OCI-LY7 (cell line): ENCODE measurements at regions of chr5 and their contacts with region 1.

Region 1: DNA sequence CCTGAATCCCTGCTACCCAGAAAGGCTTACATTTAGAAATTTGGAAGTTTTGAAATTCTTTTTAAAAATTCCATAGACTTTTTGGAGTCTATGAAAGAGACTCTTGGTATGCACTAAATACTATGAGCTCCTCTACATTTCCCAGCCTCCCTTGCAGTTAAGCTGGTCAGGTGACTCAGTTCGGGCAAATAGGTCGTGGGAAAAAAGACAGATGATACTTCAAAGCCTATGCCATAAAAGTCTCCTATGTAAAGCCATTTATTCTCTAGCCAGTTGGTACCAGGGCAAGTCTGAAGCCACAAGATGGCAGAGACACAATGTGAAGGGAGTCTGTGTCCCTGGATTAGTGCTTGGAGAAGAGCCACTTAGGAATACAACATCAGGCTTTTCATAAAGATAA is 101.8 kb downstream of the BOD1 start:
- DNase-seq: no peak
- H3K4me3 ChIP-seq: no peak overlapping the region
- H3K27ac ChIP-seq: no peak overlapping the region
- H3K4me1 ChIP-seq: no peaks in the 10 kb centered on the region
- CTCF ChIP-seq: no peak

Region 2: DNA sequence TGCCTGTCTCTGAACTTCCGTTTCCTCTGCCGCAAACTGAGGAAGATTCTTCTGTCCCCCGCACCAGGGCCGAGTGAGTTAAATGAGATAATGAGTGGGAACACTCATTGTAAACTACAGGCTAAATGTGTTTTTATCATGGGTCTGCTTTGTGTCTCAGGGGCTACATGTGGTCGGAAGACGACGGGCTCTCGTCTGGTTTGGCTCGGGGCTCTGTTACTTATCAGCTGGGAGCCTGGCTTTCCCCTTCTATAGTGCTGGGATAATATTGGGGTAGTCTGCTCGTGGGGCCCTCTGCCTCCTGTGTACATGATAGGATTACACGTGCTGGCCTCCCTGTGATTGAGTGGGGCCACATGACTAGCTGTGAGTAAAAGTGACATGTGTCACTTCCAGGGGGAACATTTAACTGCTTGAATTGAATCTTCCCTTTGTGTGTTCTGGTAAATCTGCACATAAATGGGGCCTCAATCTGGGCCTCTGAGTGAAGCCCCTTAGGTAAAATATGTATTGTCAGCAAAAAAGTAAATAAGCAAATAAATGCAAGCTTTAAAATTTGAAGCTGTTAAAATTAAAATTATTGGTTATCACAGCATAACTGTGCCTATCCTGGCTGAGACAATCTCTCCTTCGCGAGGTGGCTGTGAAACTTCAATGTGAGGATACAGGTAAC is 973.4 kb before region 1 on chr5:
- CTCF ChIA-PET with region 1: no interaction called
- POLR2A ChIA-PET with region 1: interaction called, 10 read pairs
- intact Hi-C with region 1: no loop called
- DNase-seq: no peak
- H3K4me3 ChIP-seq: no peak overlapping the region
- H3K27ac ChIP-seq: no peak overlapping the region
- H3K4me1 ChIP-seq: no peaks in the 10 kb centered on the region
- CTCF ChIP-seq: no peak